PC-3 (cell line): ENCODE measurements at regions of chr20 and their contacts with region 1.

Region 1: DNA sequence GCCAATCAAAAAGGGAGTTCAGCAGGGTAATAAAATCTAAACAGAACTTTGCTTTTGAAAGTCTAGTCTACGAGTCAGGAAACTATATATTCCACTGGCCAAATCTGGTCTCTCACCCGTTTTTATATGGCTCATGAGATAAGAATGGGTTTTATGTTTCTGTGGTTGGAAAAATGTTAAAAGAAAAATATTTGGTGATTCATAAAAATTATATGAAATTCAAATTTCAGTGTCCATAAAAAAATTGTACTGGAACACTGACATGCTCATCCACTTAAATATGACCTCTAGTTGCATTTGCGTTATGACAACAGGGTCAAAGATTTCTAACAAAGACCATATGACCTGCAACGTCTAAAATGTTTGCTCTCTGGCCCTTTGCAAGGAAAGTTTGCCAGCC is 22.3 kb upstream of the LAMP5 start:
- DNase-seq: peak; percentile 76
- ATAC-seq: peak; percentile 89
- H3K4me3 ChIP-seq: no peak overlapping the region
- H3K27ac ChIP-seq: peak overlapping the region; percentile 28
- H3K4me1 ChIP-seq: peaks cover 25% of the 10 kb centered on the region
- H3K27me3 ChIP-seq: no peaks in the 10 kb centered on the region
- CTCF ChIP-seq: no peak

Region 2: GRCh38 chr20:9590189-9590588 is 98.1 kb after region 1 on chr20:
- CTCF ChIA-PET with region 1: no interaction called
- POLR2A ChIA-PET with region 1: no interaction called
- intact Hi-C with region 1: loop called (anchors 1 kb)
- DNase-seq: peak; percentile 99
- ATAC-seq: peak; percentile 82
- H3K4me3 ChIP-seq: no peak overlapping the region
- H3K27ac ChIP-seq: peak overlapping the region; percentile 62
- H3K4me1 ChIP-seq: peaks cover 53% of the 10 kb centered on the region
- H3K27me3 ChIP-seq: no peaks in the 10 kb centered on the region
- CTCF ChIP-seq: no peak